ENCODE measurements at regions of chr15 and their contacts with region 1.

Region 1: GRCh38 chr15:80953936-80954778 is 35.5 kb downstream of the MESD start:
- DNase-seq: no peak
- ATAC-seq: no peak
- H3K4me3 ChIP-seq: no peak overlapping the region
- H3K27ac ChIP-seq: no peak overlapping the region
- H3K4me1 ChIP-seq: peaks cover 0 to 11% (median 0%) of the 10 kb centered on the region in 9 donors
- H3K27me3 ChIP-seq: no peaks in the 10 kb centered on the region
- CTCF ChIP-seq: no peak

Region 2: DNA sequence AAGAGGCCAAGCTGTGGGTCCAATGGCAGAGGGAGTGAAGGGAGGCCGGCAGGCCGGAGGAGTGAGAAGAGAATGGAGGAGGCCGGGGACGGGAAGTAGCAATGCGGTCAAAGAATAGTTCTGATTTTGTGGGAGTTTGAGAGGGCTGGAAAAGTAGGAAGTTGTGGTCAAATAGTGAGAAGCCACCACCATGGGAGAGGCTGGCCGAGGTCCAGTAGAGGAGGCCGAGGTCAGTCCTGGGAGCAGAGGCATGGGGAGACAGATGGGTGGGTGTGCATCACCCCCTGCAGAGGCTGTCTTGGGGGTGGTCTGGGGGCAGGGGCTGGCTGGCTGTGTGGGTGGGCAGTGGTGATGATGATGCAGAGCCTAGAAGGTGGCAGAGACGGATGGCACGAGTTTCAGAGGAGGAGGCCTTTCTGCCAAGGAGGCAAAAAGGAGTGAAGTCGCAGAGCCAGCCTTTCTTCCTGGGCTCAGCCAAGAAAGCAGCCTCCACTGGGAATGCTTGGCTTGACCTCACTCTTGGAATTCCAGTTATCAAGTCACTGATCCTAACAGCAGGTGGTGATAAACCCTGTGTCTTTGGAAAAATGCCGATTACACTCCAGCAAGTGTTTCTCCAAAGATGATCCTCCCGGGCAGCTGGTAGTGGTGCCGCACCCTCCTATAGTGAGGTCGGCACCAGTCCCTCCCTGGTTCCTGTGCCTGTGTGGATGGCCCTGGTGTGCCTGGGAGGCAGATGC is 492.6 kb before region 1 on chr15:
- intact Hi-C with region 1: loop called in 1 of 10 experiments (anchors 10 kb)
- DNase-seq: no peak
- ATAC-seq: peak in 2 of 8 donors; percentile 22 to 29
- H3K4me3 ChIP-seq: no peak overlapping the region
- H3K27ac ChIP-seq: no peak overlapping the region
- H3K4me1 ChIP-seq: peaks cover 0 to 13% (median 0%) of the 10 kb centered on the region in 9 donors
- H3K27me3 ChIP-seq: peaks cover 0 to 87% (median 0%) of the 10 kb centered on the region in 7 donors
- CTCF ChIP-seq: no peak

Region 3: GRCh38 chr15:80789796-80790195 is 164.4 kb before region 1 on chr15:
- intact Hi-C with region 1: loop called in 2 of 10 experiments (anchors 5 to 10 kb)
- DNase-seq: no peak
- ATAC-seq: no peak
- H3K4me3 ChIP-seq: no peak overlapping the region
- H3K27ac ChIP-seq: no peak overlapping the region
- H3K4me1 ChIP-seq: peaks cover 0 to 14% (median 0%) of the 10 kb centered on the region in 9 donors
- H3K27me3 ChIP-seq: peaks cover 0 to 18% (median 14%) of the 10 kb centered on the region in 7 donors
- CTCF ChIP-seq: no peak

Region 4: GRCh38 chr15:80904998-80905397 is 49.2 kb before region 1 on chr15:
- intact Hi-C with region 1: loop called in 1 of 10 experiments (anchors 5 kb)
- DNase-seq: peak in 1 of 2 donors; percentile 13
- ATAC-seq: peak; percentile 36 to 92 (median 77)
- H3K4me3 ChIP-seq: no peak overlapping the region
- H3K27ac ChIP-seq: no peak overlapping the region
- H3K4me1 ChIP-seq: peaks cover 0 to 12% (median 0%) of the 10 kb centered on the region in 9 donors
- H3K27me3 ChIP-seq: no peaks in the 10 kb centered on the region
- CTCF ChIP-seq: no peak